PC-9 (cell line): ENCODE measurements at regions of chr7 and their contacts with region 1.

Region 1: GRCh38 chr7:54729107-54729506 is 29.9 kb downstream of the SEC61G start:
- DNase-seq: no peak
- H3K4me3 ChIP-seq: no peak overlapping the region
- H3K27ac ChIP-seq: no peak overlapping the region
- H3K4me1 ChIP-seq: no peaks in the 10 kb centered on the region
- H3K27me3 ChIP-seq: peaks cover 41% of the 10 kb centered on the region
- CTCF ChIP-seq: no peak

Region 2: DNA sequence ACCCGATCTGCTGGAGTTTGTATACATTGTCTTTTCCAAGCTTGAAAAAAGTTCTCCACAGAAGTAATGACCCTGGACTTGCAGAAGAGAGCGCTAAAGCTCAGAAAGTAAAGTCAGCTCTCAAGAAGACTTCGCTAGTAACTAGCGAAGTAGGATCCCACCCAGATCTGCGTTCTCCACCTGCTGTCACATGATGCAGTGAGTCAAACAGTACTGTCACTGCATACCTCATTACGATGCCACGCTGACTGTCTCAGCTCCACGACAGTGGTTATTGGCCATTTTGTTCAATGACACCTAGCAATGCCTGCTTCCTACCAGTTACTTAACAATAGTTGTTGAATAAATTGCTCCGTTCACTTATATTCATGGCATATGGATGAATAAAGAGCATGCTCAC is 59.6 kb after region 1 on chr7:
- CTCF ChIA-PET with region 1: interaction called, 10 read pairs
- POLR2A ChIA-PET with region 1: no interaction called
- intact Hi-C with region 1: no loop called
- DNase-seq: peak; percentile 79 to 99
- H3K4me3 ChIP-seq: no peak overlapping the region
- H3K27ac ChIP-seq: peak overlapping the region; percentile 27
- H3K4me1 ChIP-seq: peaks cover 29% of the 10 kb centered on the region
- H3K27me3 ChIP-seq: no peaks in the 10 kb centered on the region
- CTCF ChIP-seq: peak; percentile 95